H1 (cell line): ENCODE measurements at regions of chr16 and their contacts with region 1.

Region 1: DNA sequence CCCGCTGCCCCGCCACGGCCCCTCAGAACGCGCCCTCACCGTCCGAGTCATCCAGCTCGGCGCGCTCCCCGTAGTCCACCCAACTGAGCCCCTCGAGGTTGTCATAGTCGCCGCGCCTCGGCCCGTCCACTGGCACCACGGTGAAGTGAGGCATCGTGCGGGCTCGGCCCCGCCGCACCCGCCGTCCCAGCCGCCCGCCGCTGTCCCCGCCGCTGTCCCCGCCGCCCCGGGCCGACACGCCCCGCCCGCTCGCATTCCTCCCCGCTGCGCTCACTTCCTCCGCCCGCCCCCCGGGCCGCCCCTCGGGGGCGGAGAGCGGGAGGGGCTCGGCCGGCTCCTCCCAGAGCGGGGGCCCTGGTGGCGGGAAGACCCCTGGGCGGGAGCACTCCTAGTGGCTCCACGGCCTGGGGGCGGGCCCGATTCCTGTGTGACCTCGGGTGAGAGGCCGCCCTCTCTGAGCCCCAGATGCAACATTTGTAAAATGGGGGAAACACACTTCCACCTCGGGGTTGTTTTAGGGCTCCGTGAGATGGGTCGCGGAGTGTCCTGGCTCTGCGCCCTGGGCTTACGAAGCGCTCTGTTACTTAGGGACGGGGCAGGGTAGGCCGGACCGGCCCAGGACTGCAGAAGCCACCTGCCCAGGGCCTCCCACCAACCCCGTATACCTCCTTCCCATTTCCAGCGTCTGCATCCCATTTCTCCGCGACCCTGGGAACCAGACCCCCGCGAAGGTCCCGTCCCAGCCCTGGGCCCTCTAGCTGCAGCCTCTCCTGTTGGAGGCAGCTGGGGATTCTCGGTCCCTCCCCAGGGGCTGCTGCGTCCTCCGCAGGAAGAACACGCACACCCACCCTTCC is at the start of gene SLC12A4:
- DNase-seq: peak in 1 of 2 experiments; percentile 88
- H3K4me3 ChIP-seq: peak within 1 kb of the TSS; percentile 48 to 67 (median 64)
- H3K27ac ChIP-seq: no peak within 1 kb of the TSS
- H3K4me1 ChIP-seq: peaks cover 6 to 25% (median 19%) of the 10 kb centered on the region in 4 experiments
- H3K27me3 ChIP-seq: no peaks in the 10 kb centered on the region
- CTCF ChIP-seq: no peak
- EP300 ChIP-seq: no peak
- POLR2A ChIP-seq: no peak
- RAD21 ChIP-seq: no peak
- total RNA-seq, gene SLC12A4: 41.3 and 46.6 TPM in 2 replicates

Region 2: DNA sequence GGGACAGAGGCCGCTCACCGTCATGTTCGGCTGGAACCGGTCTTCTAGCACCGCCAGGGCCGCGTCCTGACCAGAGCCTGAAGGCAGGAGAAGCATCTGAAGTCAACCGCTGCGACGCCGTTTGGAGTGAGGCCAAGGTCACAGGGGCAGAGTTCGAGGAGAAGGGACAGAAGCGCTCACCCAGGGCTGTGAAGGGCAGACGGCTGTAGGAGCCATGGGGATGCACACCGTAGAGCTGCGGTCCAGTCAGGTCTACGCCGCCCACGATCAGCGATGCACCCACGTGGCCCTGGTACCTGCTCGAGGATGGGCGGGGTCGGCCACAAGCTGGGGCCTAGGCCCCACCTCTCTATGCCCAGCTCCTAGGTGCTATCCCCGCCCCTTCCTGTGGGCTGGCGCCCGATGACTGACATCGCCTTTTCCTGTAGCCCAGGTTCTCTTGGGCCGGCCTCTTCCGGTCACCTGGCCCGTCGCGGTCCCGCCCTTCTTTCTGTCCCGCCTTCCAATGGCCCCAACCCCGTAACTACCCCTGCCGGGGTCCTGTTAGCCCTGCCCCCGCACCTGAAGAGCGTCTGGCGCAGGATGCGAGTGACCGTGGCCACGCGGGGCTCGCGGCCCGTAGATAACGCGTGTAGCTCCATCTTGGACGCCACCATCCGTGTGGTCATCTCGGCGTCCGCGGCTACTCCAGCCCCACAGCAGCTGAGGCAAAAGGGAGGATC is 33.1 kb before region 1 on chr16:
- CTCF ChIA-PET with region 1: interaction called, 90 read pairs
- POLR2A ChIA-PET with region 1: interaction called, 26 read pairs
- DNase-seq: peak; percentile 90 to 93
- H3K4me3 ChIP-seq: peak overlapping the region; percentile 69 to 98 (median 92)
- H3K27ac ChIP-seq: peak overlapping the region; percentile 74; the same call in 1 of the 2 replicates
- H3K4me1 ChIP-seq: peaks cover 0 to 15% (median 8%) of the 10 kb centered on the region in 4 experiments; a peak in 5 of 7 replicates
- H3K27me3 ChIP-seq: no peaks in the 10 kb centered on the region
- CTCF ChIP-seq: no peak
- EP300 ChIP-seq: no peak
- POLR2A ChIP-seq: peak; percentile 49 to 73
- RAD21 ChIP-seq: no peak

Region 3: GRCh38 chr16:67942200-67942509 is 26.5 kb before region 1 on chr16:
- CTCF ChIA-PET with region 1: interaction called, 90 read pairs
- POLR2A ChIA-PET with region 1: interaction called, 26 read pairs
- DNase-seq: peak; percentile 49 to 77
- H3K4me3 ChIP-seq: no peak overlapping the region
- H3K27ac ChIP-seq: no peak overlapping the region
- H3K4me1 ChIP-seq: peaks cover 0 to 2% (median 0%) of the 10 kb centered on the region in 4 experiments; a peak in 3 of 7 replicates
- H3K27me3 ChIP-seq: no peaks in the 10 kb centered on the region
- CTCF ChIP-seq: peak; percentile 84 to 99 (median 96)
- EP300 ChIP-seq: no peak
- POLR2A ChIP-seq: no peak
- RAD21 ChIP-seq: peak; percentile 71 to 80

Region 4: GRCh38 chr16:67951485-67951884 is 17.1 kb before region 1 on chr16:
- CTCF ChIA-PET with region 1: interaction called, 90 read pairs
- POLR2A ChIA-PET with region 1: interaction called, 13 read pairs
- DNase-seq: no peak
- H3K4me3 ChIP-seq: no peak overlapping the region
- H3K27ac ChIP-seq: no peak overlapping the region
- H3K4me1 ChIP-seq: no peaks in the 10 kb centered on the region
- H3K27me3 ChIP-seq: no peaks in the 10 kb centered on the region
- CTCF ChIP-seq: no peak
- EP300 ChIP-seq: no peak
- POLR2A ChIP-seq: no peak
- RAD21 ChIP-seq: no peak

Region 5: GRCh38 chr16:67979955-67980678 is 11.5 kb after region 1 on chr16 and contains the start of gene DPEP3:
- CTCF ChIA-PET with region 1: interaction called, 27 read pairs
- POLR2A ChIA-PET with region 1: interaction called, 8 read pairs
- DNase-seq: peak in 1 of 2 experiments; percentile 89
- H3K4me3 ChIP-seq: peak within 1 kb of the TSS in 2 of 4 experiments; percentile 3 to 46; a peak in 2 of 8 replicates
- H3K27ac ChIP-seq: no peak within 1 kb of the TSS
- H3K4me1 ChIP-seq: peaks cover 0 to 4% (median 0%) of the 10 kb centered on the region in 4 experiments; a peak in 3 of 7 replicates
- H3K27me3 ChIP-seq: peaks cover 0 to 2% (median 0%) of the 10 kb centered on the region in 4 experiments; a peak in 2 of 7 replicates
- CTCF ChIP-seq: peak; percentile 87 to 100 (median 93)
- EP300 ChIP-seq: peak in 1 of 2 experiments; percentile 34; a peak in 1 of 3 replicates
- POLR2A ChIP-seq: no peak
- RAD21 ChIP-seq: peak; percentile 38 to 49; a peak in 3 of 4 replicates
- total RNA-seq, gene DPEP3: 9.9 and 10.6 TPM in 2 replicates

Region 6: GRCh38 chr16:67987460-67988160 is 19.0 kb after region 1 on chr16:
- CTCF ChIA-PET with region 1: interaction called, 27 read pairs
- POLR2A ChIA-PET with region 1: interaction called, 8 read pairs
- DNase-seq: no peak
- H3K4me3 ChIP-seq: no peak overlapping the region
- H3K27ac ChIP-seq: no peak overlapping the region
- H3K4me1 ChIP-seq: no peaks in the 10 kb centered on the region
- H3K27me3 ChIP-seq: peaks cover 0 to 7% (median 5%) of the 10 kb centered on the region in 4 experiments; a peak in 5 of 7 replicates
- CTCF ChIP-seq: no peak
- EP300 ChIP-seq: no peak
- POLR2A ChIP-seq: no peak
- RAD21 ChIP-seq: no peak

Region 7: DNA sequence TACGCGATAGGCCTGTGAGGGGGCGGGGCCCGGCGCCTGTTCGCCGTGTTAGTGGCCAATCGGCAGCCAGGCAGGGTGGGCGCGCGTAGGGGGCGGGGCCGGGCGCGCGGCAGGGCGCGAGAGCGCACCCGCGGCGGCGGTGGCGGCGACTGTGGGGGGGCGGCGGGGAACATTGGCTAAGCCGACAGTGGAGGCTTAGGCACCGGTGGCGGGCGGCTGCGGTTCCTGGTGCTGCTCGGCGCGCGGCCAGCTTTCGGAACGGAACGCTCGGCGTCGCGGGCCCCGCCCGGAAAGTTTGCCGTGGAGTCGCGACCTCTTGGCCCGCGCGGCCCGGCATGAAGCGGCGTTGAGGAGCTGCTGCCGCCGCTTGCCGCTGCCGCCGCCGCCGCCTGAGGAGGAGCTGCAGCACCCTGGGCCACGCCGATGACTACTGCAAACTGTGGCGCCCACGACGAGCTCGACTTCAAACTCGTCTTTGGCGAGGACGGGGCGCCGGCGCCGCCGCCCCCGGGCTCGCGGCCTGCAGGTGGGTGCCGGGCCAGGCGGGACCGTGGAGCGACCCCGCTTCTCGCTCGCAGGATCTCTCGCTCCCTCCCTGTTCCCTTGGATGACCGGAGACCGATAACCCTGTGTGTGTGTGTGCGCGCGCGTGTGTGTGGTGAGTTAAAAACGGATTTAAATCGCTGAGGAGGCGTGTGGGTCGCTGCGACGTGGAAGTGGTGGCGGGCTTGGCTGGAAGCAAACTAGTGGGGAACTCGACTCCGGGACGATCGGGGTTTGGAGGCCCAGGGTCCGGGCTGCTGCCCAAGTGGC is 116.8 kb after region 1 on chr16 and contains the start of gene NFATC3:
- CTCF ChIA-PET with region 1: no interaction called
- POLR2A ChIA-PET with region 1: no interaction called
- DNase-seq: peak; percentile 85 to 97
- H3K4me3 ChIP-seq: peak within 1 kb of the TSS; percentile 91 to 99 (median 96)
- H3K27ac ChIP-seq: peak within 1 kb of the TSS; percentile 89
- H3K4me1 ChIP-seq: peaks cover 0 to 11% (median 6%) of the 10 kb centered on the region in 4 experiments; a peak in 5 of 7 replicates
- H3K27me3 ChIP-seq: no peaks in the 10 kb centered on the region
- CTCF ChIP-seq: no peak
- EP300 ChIP-seq: no peak
- POLR2A ChIP-seq: peak in 1 of 2 experiments; percentile 44; a peak in 1 of 3 replicates
- RAD21 ChIP-seq: no peak
- total RNA-seq, gene NFATC3: 30.2 and 34.5 TPM in 2 replicates

Region 8: DNA sequence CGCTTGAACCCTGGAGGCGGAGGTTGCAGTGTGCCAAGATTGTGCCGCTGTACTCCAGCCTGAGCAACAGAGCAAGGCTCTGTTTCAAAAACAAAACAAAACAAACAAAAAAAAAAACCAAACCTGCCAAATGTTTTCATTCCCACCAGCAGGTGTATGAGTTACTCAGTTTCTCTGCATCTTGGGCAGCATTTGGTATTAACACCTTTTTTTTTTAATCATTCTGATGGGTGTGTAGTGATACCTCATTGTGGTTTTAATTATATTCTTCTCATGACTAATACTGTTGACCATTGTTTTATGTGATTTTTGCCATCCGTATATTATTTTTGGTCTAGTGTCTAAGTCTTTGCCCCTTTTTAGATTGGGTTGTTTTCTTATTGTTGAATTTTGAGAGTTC is 131.9 kb after region 1 on chr16:
- CTCF ChIA-PET with region 1: no interaction called
- POLR2A ChIA-PET with region 1: no interaction called
- DNase-seq: no peak
- H3K4me3 ChIP-seq: no peak overlapping the region
- H3K27ac ChIP-seq: no peak overlapping the region
- H3K4me1 ChIP-seq: peaks cover 0 to 3% (median 0%) of the 10 kb centered on the region in 4 experiments; a peak in 2 of 7 replicates
- H3K27me3 ChIP-seq: no peaks in the 10 kb centered on the region
- CTCF ChIP-seq: no peak
- EP300 ChIP-seq: no peak
- POLR2A ChIP-seq: no peak
- RAD21 ChIP-seq: no peak